ENCODE measurements at regions of chr2 and their contacts with region 1.

Region 1: DNA sequence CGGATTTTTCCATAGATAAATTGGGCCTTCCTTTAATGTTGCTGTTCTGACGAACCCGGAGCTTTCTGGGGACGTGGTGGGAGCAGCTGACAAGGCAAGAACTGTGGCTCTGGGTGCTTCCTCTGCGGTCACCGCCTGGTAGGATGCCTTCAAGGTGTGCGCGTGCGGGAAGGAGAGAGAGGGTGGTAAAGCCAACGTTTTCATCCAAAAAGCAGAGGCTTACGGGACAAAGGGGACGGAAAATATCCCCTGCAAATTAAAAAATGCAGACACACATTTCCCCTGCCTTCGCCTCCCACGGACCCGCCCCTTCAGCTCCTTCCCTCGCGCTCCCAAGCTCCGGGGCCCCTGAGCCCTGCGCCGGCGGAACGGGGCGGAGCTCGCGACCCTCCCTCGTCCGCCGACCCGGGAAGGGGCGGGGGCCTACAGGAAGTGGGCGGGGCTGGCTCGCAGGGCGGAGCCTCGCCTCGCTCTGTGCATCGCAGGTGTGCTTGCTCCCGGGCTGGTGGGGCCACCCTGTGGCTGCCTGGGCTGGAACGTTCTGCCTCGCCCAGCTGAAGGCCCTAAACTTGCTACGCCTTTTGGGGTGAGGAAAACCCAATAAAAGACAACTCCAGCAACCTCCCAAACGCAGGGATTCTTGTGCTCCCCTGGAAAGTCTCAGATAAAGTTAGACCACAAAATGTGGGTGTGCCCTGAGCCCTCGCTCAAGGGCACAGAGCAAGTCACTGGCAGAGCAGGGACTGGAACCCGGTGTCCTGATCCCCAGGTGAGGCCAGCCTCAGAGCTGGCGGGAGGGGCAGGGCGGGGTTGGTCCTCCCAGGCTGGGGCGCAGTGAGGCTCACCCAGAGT is 25.4 kb upstream of the SLC66A3 start:
- DNase-seq: peak; percentile 56 to 81 (median 81)
- ATAC-seq: peak; percentile 51 to 58
- H3K4me3 ChIP-seq: peak overlapping the region; percentile 34
- H3K27ac ChIP-seq: no peak overlapping the region
- H3K4me1 ChIP-seq: no peaks in the 10 kb centered on the region
- H3K27me3 ChIP-seq: no peaks in the 10 kb centered on the region

Region 2: DNA sequence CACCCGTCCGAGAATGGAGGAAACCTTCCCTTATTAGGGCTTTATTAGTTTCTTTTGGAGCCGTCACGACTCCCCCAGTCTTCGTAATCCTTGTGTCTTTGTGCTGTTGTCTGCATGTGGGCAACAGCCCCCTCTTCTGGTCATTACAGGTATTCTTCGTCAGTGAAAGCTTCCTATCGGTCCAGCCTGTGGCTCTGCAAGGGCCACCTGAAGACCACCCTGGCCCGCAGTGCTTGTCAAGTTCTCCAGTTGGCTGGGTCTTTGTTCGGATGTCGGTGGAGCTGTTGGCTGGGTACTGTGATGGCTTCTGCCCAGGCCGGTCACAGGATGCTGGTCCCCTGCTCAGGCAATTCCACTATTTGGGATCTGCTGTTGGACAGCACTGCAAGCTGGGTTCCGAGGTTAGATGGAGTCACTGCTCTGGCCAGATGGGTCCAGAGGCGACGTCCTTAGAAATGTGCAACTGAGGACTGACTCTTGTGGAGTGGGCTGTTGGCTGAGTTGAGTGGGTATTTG is 317.0 kb after region 1 on chr2:
- intact Hi-C with region 1: loop called in 3 of 4 experiments (anchors 5 to 10 kb)
- DNase-seq: peak; percentile 50 to 53 (median 51)
- ATAC-seq: peak; percentile 82 to 84
- H3K4me3 ChIP-seq: no peak overlapping the region
- H3K27ac ChIP-seq: no peak overlapping the region
- H3K4me1 ChIP-seq: no peaks in the 10 kb centered on the region
- H3K27me3 ChIP-seq: no peaks in the 10 kb centered on the region

Measured in right cardiac atrium (tissue), 5 donors.